Activated naive CD4-positive, alpha-beta T cell treated with anti-CD3 and anti-CD28 coated beads for 36 hours (primary cell): ENCODE measurements at regions of chr6 and their contacts with region 1.

Region 1: GRCh38 chr6:135183532-135184440 is 2.7 kb downstream of the MYB start:
- DNase-seq: peak; percentile 92
- H3K4me3 Mint-ChIP-seq: peak overlapping the region; percentile 89
- H3K27ac Mint-ChIP-seq: peak overlapping the region; percentile 89
- H3K4me1 Mint-ChIP-seq: peaks cover 15% of the 10 kb centered on the region
- H3K27me3 Mint-ChIP-seq: no peaks in the 10 kb centered on the region

Region 2: GRCh38 chr6:134529921-134530320 is 653.9 kb before region 1 on chr6:
- CTCF ChIA-PET with region 1: no interaction called
- intact Hi-C with region 1: loop called (anchors 10 kb)
- DNase-seq: no peak
- H3K4me3 Mint-ChIP-seq: no peak overlapping the region
- H3K27ac Mint-ChIP-seq: no peak overlapping the region
- H3K4me1 Mint-ChIP-seq: peaks cover 27% of the 10 kb centered on the region
- H3K27me3 Mint-ChIP-seq: no peaks in the 10 kb centered on the region

Region 3: GRCh38 chr6:135054569-135055498 is 129.0 kb before region 1 on chr6 and contains the start of gene HBS1L:
- CTCF ChIA-PET with region 1: interaction called, 3 read pairs
- intact Hi-C with region 1: loop called (anchors 1 kb)
- DNase-seq: peak; percentile 98
- H3K4me3 Mint-ChIP-seq: peak within 1 kb of the TSS; percentile 90
- H3K27ac Mint-ChIP-seq: peak within 1 kb of the TSS; percentile 96
- H3K4me1 Mint-ChIP-seq: peaks cover 23% of the 10 kb centered on the region
- H3K27me3 Mint-ChIP-seq: no peaks in the 10 kb centered on the region
- total RNA-seq, gene HBS1L: 150 to 153 TPM

Region 4: GRCh38 chr6:135145063-135145800 is 38.6 kb before region 1 on chr6:
- CTCF ChIA-PET with region 1: interaction called, 15 read pairs
- intact Hi-C with region 1: loop called (anchors 1 kb)
- DNase-seq: no peak
- H3K4me3 Mint-ChIP-seq: no peak overlapping the region
- H3K27ac Mint-ChIP-seq: peak overlapping the region; percentile 76
- H3K4me1 Mint-ChIP-seq: peaks cover 51% of the 10 kb centered on the region
- H3K27me3 Mint-ChIP-seq: no peaks in the 10 kb centered on the region

Region 5: GRCh38 chr6:135212020-135212806 is 28.4 kb after region 1 on chr6:
- CTCF ChIA-PET with region 1: no interaction called
- intact Hi-C with region 1: loop called (anchors 1 kb)
- DNase-seq: peak; percentile 62
- H3K4me3 Mint-ChIP-seq: no peak overlapping the region
- H3K27ac Mint-ChIP-seq: no peak overlapping the region
- H3K4me1 Mint-ChIP-seq: peaks cover 35% of the 10 kb centered on the region
- H3K27me3 Mint-ChIP-seq: no peaks in the 10 kb centered on the region

Region 6: GRCh38 chr6:136289579-136290409 is 1106.0 kb after region 1 on chr6 and contains the start of gene BCLAF1:
- CTCF ChIA-PET with region 1: no interaction called
- intact Hi-C with region 1: loop called (anchors 5 kb)
- DNase-seq: peak; percentile 99
- H3K4me3 Mint-ChIP-seq: peak within 1 kb of the TSS; percentile 97
- H3K27ac Mint-ChIP-seq: peak within 1 kb of the TSS; percentile 100
- H3K4me1 Mint-ChIP-seq: peaks cover 44% of the 10 kb centered on the region
- H3K27me3 Mint-ChIP-seq: no peaks in the 10 kb centered on the region
- total RNA-seq, gene BCLAF1: 108 to 117 TPM